HEK293 (cell line): ENCODE measurements at regions of chr7 and their contacts with region 1.

Region 1: DNA sequence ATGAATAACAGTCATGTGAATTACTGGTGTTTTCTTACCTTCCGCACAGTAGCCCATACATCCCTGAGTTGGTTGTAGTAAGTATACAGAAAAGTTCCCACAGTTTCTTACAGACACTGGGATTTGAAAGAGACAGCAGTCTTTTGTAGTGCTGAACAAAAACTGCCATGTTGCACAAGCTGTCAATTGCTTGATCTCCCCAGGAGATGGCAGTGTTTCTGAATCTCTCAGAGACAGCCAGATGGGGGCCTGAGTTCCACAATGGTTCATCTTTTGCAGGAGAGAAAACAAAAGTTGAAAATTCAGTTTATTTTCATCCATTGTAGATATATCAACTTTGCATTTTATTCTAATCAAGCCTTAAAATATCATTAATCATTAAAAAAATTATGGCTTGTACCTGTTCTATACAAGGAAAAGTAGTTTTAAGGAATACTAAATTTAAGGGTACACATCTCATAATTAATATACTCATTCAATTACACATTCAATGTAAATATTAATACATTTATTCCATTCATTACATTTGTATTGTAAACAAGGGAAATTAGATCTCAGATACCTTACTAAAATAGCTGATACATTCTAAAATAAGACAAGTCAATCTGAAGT is 14.5 kb downstream of the VWDE start:
- H3K4me3 ChIP-seq: no peak overlapping the region
- H3K27ac ChIP-seq: no peak overlapping the region
- H3K4me1 ChIP-seq: no peaks in the 10 kb centered on the region
- CTCF ChIP-seq: no peak

Region 2: DNA sequence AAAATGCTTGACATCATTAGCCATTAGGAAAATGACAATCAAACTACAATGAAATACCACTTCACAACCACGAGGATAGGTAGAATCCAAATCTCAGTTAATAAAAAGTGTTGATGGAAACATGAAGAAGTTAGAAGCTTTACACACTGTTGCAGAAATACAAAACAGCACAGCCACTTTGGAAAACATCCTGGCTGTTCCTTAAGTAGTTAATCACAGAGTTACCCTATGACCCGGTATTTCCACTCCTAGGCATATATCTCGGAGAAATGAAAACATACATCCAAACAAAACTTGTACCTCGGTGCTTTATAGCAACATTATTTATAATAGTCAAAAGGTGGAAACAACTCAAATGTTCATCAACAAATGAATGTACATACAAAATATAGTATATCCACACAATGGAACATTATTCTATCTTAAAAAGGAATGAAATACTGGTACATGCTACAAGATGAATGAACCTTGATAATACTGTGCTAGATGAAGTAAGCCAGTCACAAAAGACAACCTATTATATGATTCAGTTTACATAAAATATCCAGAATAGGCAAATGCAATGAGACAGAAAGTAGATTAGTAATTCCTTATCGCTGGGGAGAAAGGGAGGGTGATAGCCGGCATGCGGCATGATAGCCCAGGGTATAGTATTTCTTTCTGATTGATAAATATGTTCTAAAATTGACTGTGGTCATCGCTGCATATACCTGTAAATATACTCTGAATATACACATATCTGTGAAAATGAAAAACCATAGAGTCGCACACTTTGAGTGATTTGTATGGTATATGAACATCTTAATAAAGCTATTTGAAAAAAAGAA is 12.6 kb after region 1 on chr7:
- CTCF ChIA-PET with region 1: interaction called, 11 read pairs
- POLR2A ChIA-PET with region 1: no interaction called
- H3K4me3 ChIP-seq: peak overlapping the region; percentile 60
- H3K27ac ChIP-seq: no peak overlapping the region
- H3K4me1 ChIP-seq: peaks cover 3% of the 10 kb centered on the region; the same call in 1 of the 2 replicates
- CTCF ChIP-seq: no peak

Region 3: DNA sequence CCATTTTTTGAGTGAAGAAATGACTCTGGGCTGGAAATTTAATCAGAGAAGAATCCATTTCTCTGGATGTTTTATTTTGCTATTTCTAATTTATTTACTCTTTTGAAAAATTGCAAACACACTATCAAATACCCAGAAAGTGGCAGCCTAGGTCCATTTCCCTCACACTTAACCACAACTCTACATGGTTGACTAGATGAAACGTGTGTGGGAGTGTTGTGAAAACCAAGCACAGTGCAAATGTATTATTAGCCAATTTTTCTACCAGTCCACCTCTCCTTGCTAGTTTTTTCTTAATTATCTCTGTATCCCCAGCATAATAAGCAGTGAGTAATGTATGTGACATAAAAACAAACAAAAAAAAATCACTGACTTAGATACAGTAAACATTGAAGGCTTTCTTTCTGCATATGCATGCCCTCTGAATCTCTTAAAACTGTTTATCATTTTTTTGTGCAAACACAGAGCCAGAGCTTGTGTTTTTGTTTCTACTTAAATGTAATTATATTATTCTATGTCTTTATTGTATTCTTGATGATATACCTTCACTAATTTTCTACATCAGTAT is 212.2 kb after region 1 on chr7:
- CTCF ChIA-PET with region 1: no interaction called
- POLR2A ChIA-PET with region 1: no interaction called
- H3K4me3 ChIP-seq: no peak overlapping the region
- H3K27ac ChIP-seq: no peak overlapping the region
- H3K4me1 ChIP-seq: no peaks in the 10 kb centered on the region
- CTCF ChIP-seq: no peak